Activated CD4-positive, alpha-beta T cell treated with anti-CD3 and anti-CD28 coated beads for 36 hours (primary cell): ENCODE measurements at regions of chr7 and their contacts with region 1.

Region 1: DNA sequence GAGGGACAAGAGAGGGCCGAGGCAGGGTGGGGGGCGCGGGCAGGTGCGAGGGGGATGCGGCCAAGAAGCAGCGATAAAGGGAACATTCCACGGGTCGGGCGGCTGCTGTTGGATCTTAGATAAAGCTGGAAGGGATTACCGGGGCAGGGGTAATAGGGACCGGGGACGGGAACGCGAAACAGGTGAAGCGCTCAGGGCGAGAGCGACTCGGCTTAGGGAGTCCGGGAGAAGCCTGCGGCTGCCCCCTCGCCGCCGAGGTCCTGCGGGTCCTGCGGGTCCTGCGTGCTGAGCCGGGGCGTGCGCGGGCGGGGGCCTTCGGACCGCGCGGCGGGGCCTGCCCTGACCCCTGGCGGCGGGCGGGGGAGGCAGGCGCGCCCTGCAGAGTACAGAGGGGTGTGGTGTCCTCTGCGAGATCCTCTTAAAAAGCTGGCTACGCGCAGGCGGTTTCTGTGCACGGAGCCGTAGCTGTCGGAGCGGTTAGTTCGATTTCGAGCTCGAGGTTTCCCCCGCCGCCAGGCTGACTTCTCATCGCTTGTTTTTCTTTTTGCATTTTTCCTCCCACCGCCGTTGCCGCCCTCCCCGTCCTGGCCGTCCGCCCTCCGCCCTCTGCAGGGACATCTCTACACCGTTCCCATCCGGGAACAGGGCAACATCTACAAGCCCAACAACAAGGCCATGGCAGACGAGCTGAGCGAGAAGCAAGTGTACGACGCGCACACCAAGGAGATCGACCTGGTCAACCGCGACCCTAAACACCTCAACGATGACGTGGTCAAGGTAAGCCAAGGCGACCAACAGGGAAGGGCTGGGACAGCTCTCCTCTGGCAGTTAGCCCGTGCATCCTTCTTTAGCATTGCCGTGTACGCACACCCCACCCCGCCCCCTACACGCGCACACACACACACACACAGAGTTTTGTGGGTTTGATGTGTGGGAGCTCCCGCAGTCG is 1.4 kb downstream of the CAV1 start:
- DNase-seq: peak; percentile 80
- ATAC-seq: peak; percentile 96
- H3K4me3 Mint-ChIP-seq: peak overlapping the region; percentile 71
- H3K27ac Mint-ChIP-seq: no peak overlapping the region
- H3K4me1 Mint-ChIP-seq: peaks cover 20% of the 10 kb centered on the region
- H3K27me3 Mint-ChIP-seq: peaks cover 59% of the 10 kb centered on the region

Region 2: DNA sequence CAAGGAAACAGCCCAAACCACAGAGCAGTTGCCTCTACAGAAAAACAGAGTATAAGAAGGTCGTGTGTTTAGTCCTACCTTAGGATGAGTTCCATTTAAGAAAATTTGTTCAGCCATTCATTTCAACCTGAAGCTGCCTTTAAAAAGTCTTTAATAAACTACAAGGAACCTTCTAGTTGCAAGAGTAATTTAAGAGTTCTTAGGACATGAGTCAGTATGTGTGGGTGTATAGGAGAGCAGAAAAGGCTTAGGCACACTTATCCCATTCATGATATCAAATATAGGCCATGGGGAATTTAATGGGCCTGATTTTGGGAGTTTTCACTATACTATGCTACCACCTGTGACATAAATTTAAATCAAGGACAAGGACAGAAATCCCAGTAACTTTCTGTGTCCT is 992.4 kb before region 1 on chr7:
- CTCF ChIA-PET with region 1: no interaction called
- POLR2A ChIA-PET with region 1: no interaction called
- intact Hi-C with region 1: no loop called
- DNase-seq: no peak
- ATAC-seq: no peak
- H3K4me3 Mint-ChIP-seq: no peak overlapping the region
- H3K27ac Mint-ChIP-seq: no peak overlapping the region
- H3K4me1 Mint-ChIP-seq: no peaks in the 10 kb centered on the region
- H3K27me3 Mint-ChIP-seq: peaks cover 3% of the 10 kb centered on the region

Region 3: GRCh38 chr7:116271963-116272839 is 254.0 kb before region 1 on chr7:
- CTCF ChIA-PET with region 1: no interaction called
- POLR2A ChIA-PET with region 1: no interaction called
- intact Hi-C with region 1: no loop called
- DNase-seq: peak; percentile 11
- ATAC-seq: peak; percentile 74
- H3K4me3 Mint-ChIP-seq: no peak overlapping the region
- H3K27ac Mint-ChIP-seq: no peak overlapping the region
- H3K4me1 Mint-ChIP-seq: no peaks in the 10 kb centered on the region
- H3K27me3 Mint-ChIP-seq: peaks cover 15% of the 10 kb centered on the region

Region 4: GRCh38 chr7:116499168-116500077 is 26.8 kb before region 1 on chr7 and contains the start of gene CAV2:
- CTCF ChIA-PET with region 1: interaction called, 4 read pairs
- POLR2A ChIA-PET with region 1: no interaction called
- intact Hi-C with region 1: loop called in 1 of 2 experiments (anchors 1 kb)
- DNase-seq: peak; percentile 31
- ATAC-seq: no peak
- H3K4me3 Mint-ChIP-seq: peak within 1 kb of the TSS; percentile 43
- H3K27ac Mint-ChIP-seq: no peak within 1 kb of the TSS
- H3K4me1 Mint-ChIP-seq: peaks cover 10% of the 10 kb centered on the region
- H3K27me3 Mint-ChIP-seq: peaks cover 47% of the 10 kb centered on the region
- total RNA-seq, gene CAV2: not detected